Heart right ventricle (tissue), 16 donors: ENCODE measurements at regions of chr20 and their contacts with region 1.

Region 1: DNA sequence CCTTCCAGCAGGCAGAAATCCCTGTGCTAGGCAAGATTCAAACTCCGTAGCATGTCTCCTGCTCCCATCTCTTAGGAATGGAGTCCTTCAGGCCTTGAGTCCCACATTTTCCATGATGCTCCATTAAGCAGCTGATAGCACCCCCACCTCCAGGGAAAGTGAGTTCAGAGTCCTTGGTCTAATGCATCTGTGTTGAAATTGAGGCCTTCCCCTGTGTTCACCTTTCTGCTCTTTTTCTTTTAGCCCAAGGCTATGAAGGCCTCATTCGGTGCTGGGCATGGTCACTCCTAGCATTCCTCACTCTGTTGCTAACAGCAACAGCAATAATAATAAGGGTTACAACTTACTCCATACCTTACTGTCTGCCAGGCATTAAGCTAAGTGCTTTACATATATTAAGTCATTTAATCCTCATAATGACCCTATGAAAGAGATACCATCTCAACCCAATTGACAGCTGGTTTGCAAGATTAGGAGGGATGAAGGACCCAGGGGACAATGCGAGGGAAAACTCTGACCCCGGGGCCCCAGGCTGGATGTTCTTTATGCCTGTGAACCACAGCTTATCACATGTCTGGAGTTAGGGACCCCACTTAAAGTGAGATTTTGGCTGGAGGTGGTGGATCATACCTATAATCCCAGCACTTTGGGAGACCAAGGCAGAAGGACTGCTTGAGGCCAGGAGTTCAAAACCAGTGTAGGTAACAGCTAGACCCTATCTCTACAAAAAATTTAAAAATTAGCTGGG is 17.5 kb upstream of the PANK2 start:
- DNase-seq: no peak
- ATAC-seq: no peak
- H3K4me3 ChIP-seq: no peak overlapping the region
- H3K27ac ChIP-seq: no peak overlapping the region
- H3K4me1 ChIP-seq: peaks cover 0 to 36% (median 0%) of the 10 kb centered on the region in 9 donors
- H3K27me3 ChIP-seq: no peaks in the 10 kb centered on the region
- CTCF ChIP-seq: no peak

Region 2: GRCh38 chr20:4006640-4007039 is 134.9 kb after region 1 on chr20:
- intact Hi-C with region 1: loop called in 1 of 10 experiments (anchors 10 kb)
- DNase-seq: peak; percentile 62 to 63
- ATAC-seq: peak; percentile 76 to 97 (median 91)
- H3K4me3 ChIP-seq: no peak overlapping the region
- H3K27ac ChIP-seq: peak overlapping the region in 7 of 10 donors; percentile 2 to 59 (median 32)
- H3K4me1 ChIP-seq: peaks cover 7 to 50% (median 21%) of the 10 kb centered on the region in 9 donors
- H3K27me3 ChIP-seq: no peaks in the 10 kb centered on the region
- CTCF ChIP-seq: no peak

Region 3: GRCh38 chr20:4091490-4092479 is 220.1 kb after region 1 on chr20:
- intact Hi-C with region 1: no loop called
- DNase-seq: peak; percentile 51 to 70
- ATAC-seq: peak; percentile 47 to 79 (median 72)
- H3K4me3 ChIP-seq: no peak overlapping the region
- H3K27ac ChIP-seq: peak overlapping the region in 2 of 10 donors; percentile 40 to 73
- H3K4me1 ChIP-seq: peaks cover 0 to 23% (median 4%) of the 10 kb centered on the region in 9 donors
- H3K27me3 ChIP-seq: peaks cover 0 to 6% (median 0%) of the 10 kb centered on the region in 7 donors
- CTCF ChIP-seq: peak; percentile 27 to 74 (median 66)